ENCODE measurements at regions of chr7 and their contacts with region 1.

Region 1: GRCh38 chr7:30026229-30027064 is at the start of gene FKBP14:
- DNase-seq: peak; percentile 93 to 99
- ATAC-seq: peak; percentile 92 to 97 (median 96)
- H3K4me3 ChIP-seq: peak within 1 kb of the TSS; percentile 39 to 98 (median 92)
- H3K27ac ChIP-seq: peak within 1 kb of the TSS in 9 of 10 donors; percentile 88 to 92 (median 90)
- H3K4me1 ChIP-seq: peaks cover 0 to 47% (median 36%) of the 10 kb centered on the region in 9 donors
- H3K27me3 ChIP-seq: no peaks in the 10 kb centered on the region
- CTCF ChIP-seq: no peak
- total RNA-seq, gene FKBP14: 8.3 to 16.0 (median 13.5) TPM

Region 2: GRCh38 chr7:29988424-29989256 is 37.8 kb before region 1 on chr7:
- intact Hi-C with region 1: no loop called
- DNase-seq: peak; percentile 21 to 59
- ATAC-seq: peak; percentile 43 to 74 (median 58)
- H3K4me3 ChIP-seq: peak overlapping the region; percentile 74 to 94 (median 86)
- H3K27ac ChIP-seq: peak overlapping the region; percentile 14 to 89 (median 82)
- H3K4me1 ChIP-seq: peaks cover 0 to 24% (median 5%) of the 10 kb centered on the region in 9 donors
- H3K27me3 ChIP-seq: peaks cover 0 to 32% (median 0%) of the 10 kb centered on the region in 7 donors
- CTCF ChIP-seq: no peak

Region 3: DNA sequence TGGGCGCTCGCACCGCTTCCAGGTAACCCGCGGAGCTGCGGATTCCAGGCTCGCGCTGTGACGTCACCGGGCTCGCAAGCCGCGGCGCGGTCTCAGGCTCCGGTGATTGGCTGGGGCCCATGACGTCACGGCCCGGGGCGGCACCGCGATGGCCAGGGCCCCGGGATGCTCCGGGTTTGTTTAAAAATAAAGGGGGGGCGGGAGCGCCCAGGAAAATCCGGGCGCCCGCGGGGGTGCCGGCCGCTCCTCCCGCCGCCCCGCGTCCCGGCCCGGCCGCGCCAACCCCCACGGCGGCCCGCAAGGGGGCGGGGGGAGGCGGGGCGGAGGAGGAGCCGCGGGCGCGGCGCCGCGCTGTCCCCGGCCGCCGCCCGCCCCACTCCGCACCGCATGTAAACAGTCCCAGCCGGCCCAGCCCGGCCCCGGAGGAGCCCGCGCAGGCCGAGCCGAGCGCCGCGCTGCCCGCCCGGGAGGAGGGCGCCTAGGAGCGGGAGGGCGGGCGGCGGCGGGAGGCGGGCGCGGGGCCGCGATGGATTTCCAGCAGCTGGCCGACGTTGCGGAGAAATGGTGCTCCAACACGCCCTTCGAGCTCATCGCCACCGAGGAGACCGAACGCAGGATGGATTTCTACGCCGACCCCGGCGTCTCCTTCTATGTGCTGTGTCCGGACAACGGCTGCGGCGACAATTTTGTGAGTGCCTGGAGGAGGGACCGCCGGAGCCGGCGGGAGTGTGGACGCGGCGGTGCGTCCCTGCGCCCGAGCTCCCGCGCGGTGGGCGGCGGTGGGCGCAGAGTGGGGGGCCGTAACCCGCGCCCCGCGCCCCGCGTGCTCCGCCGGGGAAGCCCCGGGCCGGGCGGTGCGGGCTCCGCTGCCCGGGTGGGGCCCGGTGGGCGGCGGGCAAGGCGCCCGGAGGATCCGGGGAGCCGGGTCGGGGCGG is 108.4 kb after region 1 on chr7 and contains the start of gene MTURN:
- intact Hi-C with region 1: loop called in 1 of 10 experiments (anchors 5 kb)
- DNase-seq: peak; percentile 86 to 90
- ATAC-seq: peak; percentile 80 to 95 (median 84)
- H3K4me3 ChIP-seq: peak within 1 kb of the TSS; percentile 68 to 99 (median 94)
- H3K27ac ChIP-seq: peak within 1 kb of the TSS; percentile 87 to 95 (median 92)
- H3K4me1 ChIP-seq: peaks cover 0 to 42% (median 15%) of the 10 kb centered on the region in 9 donors
- H3K27me3 ChIP-seq: no peaks in the 10 kb centered on the region
- CTCF ChIP-seq: no peak
- total RNA-seq, gene MTURN: 16.2 to 46.4 (median 31.7) TPM

Region 4: DNA sequence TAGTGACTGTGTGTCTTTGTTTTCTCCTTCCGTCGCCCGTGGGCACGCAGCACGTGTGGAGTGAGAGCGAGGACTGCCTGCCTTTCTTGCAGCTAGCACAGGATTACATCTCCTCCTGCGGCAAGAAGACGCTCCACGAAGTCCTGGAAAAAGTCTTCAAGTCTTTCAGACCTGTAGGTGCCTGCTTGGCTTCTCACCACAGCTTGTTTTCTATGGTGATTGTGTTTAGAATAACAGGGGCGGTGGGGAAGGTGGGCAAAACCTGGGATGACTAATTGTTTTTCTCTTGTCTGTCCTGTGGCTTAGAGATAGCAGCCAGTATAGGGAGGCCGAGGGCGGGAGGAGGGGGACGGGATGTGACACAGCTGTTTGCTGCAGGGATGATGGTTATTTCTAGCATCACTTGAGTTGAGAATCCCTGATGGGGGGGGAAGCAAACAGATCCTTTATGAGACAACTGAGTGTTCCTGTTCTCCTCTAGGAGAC is 119.7 kb after region 1 on chr7:
- intact Hi-C with region 1: no loop called
- DNase-seq: peak in 1 of 2 donors; percentile 61
- ATAC-seq: peak in 7 of 8 donors; percentile 27 to 78 (median 66)
- H3K4me3 ChIP-seq: no peak overlapping the region
- H3K27ac ChIP-seq: peak overlapping the region in 4 of 10 donors; percentile 15 to 52 (median 23)
- H3K4me1 ChIP-seq: peaks cover 0 to 54% (median 25%) of the 10 kb centered on the region in 9 donors
- H3K27me3 ChIP-seq: no peaks in the 10 kb centered on the region
- CTCF ChIP-seq: no peak

Region 5: GRCh38 chr7:30284298-30285066 is 258.0 kb after region 1 on chr7 and contains the start of gene ZNRF2:
- intact Hi-C with region 1: loop called in 1 of 10 experiments (anchors 10 kb)
- DNase-seq: peak; percentile 98
- ATAC-seq: peak; percentile 92 to 99 (median 98)
- H3K4me3 ChIP-seq: peak within 1 kb of the TSS; percentile 45 to 95 (median 81)
- H3K27ac ChIP-seq: peak within 1 kb of the TSS; percentile 83 to 99 (median 98)
- H3K4me1 ChIP-seq: peaks cover 4 to 42% (median 29%) of the 10 kb centered on the region in 9 donors
- H3K27me3 ChIP-seq: no peaks in the 10 kb centered on the region
- CTCF ChIP-seq: peak; percentile 11 to 83 (median 53)
- total RNA-seq, gene ZNRF2: 5.3 to 13.8 (median 8.8) TPM

Measured in heart right ventricle (tissue), 16 donors.